ENCODE measurements at regions of chrX and their contacts with region 1.

Region 1: DNA sequence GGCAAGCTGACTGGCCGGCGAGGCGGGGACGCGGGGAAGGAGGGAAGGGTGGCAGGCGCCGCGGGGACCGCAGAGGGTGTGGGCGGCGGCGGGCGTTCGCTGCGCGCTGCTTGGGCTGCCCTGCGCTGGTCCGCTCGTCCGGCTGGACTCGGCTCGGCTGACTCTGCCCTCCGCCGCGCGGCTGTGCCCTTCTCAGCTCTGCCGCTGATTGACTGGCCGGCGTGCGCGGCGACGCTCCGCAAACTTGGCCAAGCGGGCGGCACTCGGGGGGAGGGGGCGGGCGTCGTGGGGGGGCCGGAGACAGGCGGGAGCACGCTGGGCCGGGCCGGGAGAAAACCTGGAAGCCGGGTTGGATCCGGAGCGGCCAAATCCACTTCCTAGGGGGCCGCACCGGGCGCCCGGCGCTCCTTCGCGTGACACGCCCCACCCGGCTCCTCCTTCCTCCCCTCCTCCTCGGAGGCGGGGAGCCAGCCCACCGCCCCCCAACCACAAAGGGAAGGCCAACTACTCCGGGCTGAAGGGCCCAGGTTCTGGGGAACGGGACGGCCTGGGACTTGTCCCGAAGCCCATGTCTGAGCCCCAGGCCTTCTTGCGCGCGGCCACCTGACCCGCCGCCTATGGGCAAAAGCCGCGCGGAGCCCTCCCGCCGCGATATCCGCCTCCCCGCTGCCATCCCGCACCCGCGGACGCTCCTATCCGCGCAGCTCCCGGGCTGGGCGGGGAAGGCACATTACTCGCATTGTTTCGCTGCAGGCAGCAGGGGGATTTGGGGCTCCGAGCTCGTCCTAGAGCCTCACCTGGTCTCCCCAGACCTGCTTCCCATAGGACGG is at the start of gene GPC4:
- DNase-seq: peak; percentile 79 to 88
- ATAC-seq: peak; percentile 87 to 93 (median 88)
- H3K4me3 ChIP-seq: peak within 1 kb of the TSS; percentile 77
- H3K27ac ChIP-seq: peak within 1 kb of the TSS; percentile 86
- H3K4me1 ChIP-seq: peaks cover 9% of the 10 kb centered on the region
- H3K27me3 ChIP-seq: peaks cover 0 to 9% (median 0%) of the 10 kb centered on the region in 3 donors
- CTCF ChIP-seq: no peak
- total RNA-seq, gene GPC4: 12.3 to 22.0 (median 20.3) TPM

Region 2: GRCh38 chrX:132948648-132949260 is 466.7 kb before region 1 on chrX:
- intact Hi-C with region 1: no loop called
- DNase-seq: no peak
- ATAC-seq: no peak
- H3K4me3 ChIP-seq: no peak overlapping the region
- H3K27ac ChIP-seq: no peak overlapping the region
- H3K4me1 ChIP-seq: no peaks in the 10 kb centered on the region
- H3K27me3 ChIP-seq: no peaks in the 10 kb centered on the region
- CTCF ChIP-seq: no peak

Region 3: DNA sequence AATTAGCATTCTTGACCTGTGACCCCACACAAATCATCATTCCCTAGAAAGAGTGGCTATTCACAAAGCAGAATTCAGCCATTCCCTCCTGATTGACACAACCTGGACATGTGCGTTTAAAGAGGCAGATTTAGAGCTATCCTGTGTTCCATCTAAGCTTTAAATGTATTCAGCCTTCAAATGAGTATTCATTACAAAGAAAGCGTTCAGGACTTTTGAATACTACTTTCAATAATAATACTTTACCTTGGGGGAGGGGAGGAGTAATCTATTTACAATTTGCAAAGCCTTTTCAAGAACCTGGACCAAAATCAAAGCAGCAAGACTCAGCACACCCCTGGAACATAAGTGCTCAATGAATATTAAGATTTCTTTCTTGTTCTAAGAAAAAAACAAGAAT is 22.3 kb after region 1 on chrX:
- intact Hi-C with region 1: loop called in 1 of 2 experiments (anchors 1 kb)
- DNase-seq: no peak
- ATAC-seq: no peak
- H3K4me3 ChIP-seq: no peak overlapping the region
- H3K27ac ChIP-seq: no peak overlapping the region
- H3K4me1 ChIP-seq: no peaks in the 10 kb centered on the region
- H3K27me3 ChIP-seq: no peaks in the 10 kb centered on the region
- CTCF ChIP-seq: no peak

Region 4: GRCh38 chrX:133523081-133523487 is 107.6 kb after region 1 on chrX:
- intact Hi-C with region 1: loop called in 1 of 2 experiments (anchors 10 kb)
- DNase-seq: peak; percentile 43 to 62
- ATAC-seq: peak; percentile 71 to 90 (median 84)
- H3K4me3 ChIP-seq: no peak overlapping the region
- H3K27ac ChIP-seq: peak overlapping the region; percentile 71
- H3K4me1 ChIP-seq: peaks cover 5% of the 10 kb centered on the region
- H3K27me3 ChIP-seq: no peaks in the 10 kb centered on the region
- CTCF ChIP-seq: no peak

Region 5: GRCh38 chrX:133530960-133531359 is 115.5 kb after region 1 on chrX:
- intact Hi-C with region 1: loop called (anchors 10 kb)
- DNase-seq: no peak
- ATAC-seq: no peak
- H3K4me3 ChIP-seq: no peak overlapping the region
- H3K27ac ChIP-seq: no peak overlapping the region
- H3K4me1 ChIP-seq: no peaks in the 10 kb centered on the region
- H3K27me3 ChIP-seq: peaks cover 0 to 4% (median 0%) of the 10 kb centered on the region in 3 donors
- CTCF ChIP-seq: no peak

Region 6: DNA sequence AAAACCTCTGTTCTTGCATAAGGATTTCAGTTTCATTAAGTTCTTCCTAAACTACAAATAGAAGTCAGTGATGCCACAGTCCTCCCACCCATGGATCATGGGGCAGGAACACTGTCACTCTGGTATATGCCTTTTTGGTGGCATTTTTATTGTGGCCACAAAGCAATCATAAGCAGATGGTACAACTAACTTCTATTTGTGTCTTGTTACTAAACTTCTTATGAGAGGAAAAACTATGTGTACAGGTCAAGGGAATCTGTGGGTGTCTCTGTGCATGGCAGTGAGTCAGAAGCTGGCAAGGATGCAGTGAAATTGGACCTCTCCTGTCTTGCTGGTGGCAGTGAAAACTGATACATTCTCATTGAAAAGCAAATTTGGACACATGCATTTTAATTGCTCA is 244.8 kb after region 1 on chrX:
- intact Hi-C with region 1: loop called in 1 of 2 experiments (anchors 10 kb)
- DNase-seq: no peak
- ATAC-seq: peak; percentile 75 to 85 (median 79)
- H3K4me3 ChIP-seq: no peak overlapping the region
- H3K27ac ChIP-seq: peak overlapping the region; percentile 30
- H3K4me1 ChIP-seq: peaks cover 6% of the 10 kb centered on the region
- H3K27me3 ChIP-seq: peaks cover 0 to 14% (median 0%) of the 10 kb centered on the region in 3 donors
- CTCF ChIP-seq: no peak

Measured in psoas muscle (tissue), 8 donors.